ENCODE measurements at regions of chr2 and their contacts with region 1.

Region 1: GRCh38 chr2:231612179-231613053 is 19.8 kb downstream of the TEX44 start:
- DNase-seq: peak; percentile 75
- ATAC-seq: peak; percentile 68
- H3K4me3 ChIP-seq: peak overlapping the region; percentile 78; the same call in 1 of the 2 replicates
- H3K27ac ChIP-seq: peak overlapping the region; percentile 99
- H3K4me1 ChIP-seq: peaks cover 29% of the 10 kb centered on the region
- H3K27me3 ChIP-seq: no peaks in the 10 kb centered on the region
- CTCF ChIP-seq: peak; percentile 93 to 96 (median 94)
- EP300 ChIP-seq: peak in 1 of 2 experiments; percentile 26; a peak in 1 of 4 replicates
- POLR2A ChIP-seq: 0 out of 2 replicates have a peak, but pooled peaks have one; percentile 26
- RAD21 ChIP-seq: peak; percentile 96

Region 2: DNA sequence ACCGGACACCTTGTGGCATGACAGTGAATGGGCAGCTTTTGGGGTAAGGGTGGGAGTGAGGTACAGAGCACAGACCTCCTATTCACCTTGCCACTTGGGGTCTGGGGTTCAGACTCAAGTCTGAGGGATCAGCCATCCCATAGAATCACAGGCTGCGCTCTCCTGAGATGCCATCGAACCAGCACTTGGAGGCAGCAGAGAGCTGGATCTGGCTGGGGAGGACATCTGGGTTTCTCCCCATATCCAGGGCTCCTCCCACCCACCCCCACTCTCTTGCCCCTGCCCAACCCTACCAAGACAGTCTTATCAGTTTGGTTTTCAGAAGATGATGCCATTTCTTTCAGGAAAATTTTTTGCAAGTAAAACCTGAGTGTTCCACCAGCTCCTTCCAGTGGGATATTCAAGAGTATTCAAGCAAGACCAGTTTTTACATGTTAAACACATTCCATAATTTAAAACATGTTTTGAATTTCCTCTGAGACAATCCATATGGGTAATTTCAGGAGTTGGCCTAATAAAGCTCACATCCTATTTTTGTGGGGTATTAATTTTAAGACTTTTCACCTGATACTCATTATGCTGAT is 48.9 kb before region 1 on chr2:
- CTCF ChIA-PET with region 1: interaction called, 10 read pairs
- POLR2A ChIA-PET with region 1: no interaction called
- RAD21 ChIA-PET with region 1: interaction called, 10 read pairs
- SMC1A ChIA-PET with region 1: interaction called, 4 read pairs
- in situ Hi-C with region 1: no loop called
- intact Hi-C with region 1: no loop called
- DNase-seq: no peak
- ATAC-seq: peak; percentile 99
- H3K4me3 ChIP-seq: no peak overlapping the region
- H3K27ac ChIP-seq: no peak overlapping the region
- H3K4me1 ChIP-seq: no peaks in the 10 kb centered on the region; the same call in 1 of the 2 replicates
- H3K27me3 ChIP-seq: no peaks in the 10 kb centered on the region
- CTCF ChIP-seq: peak; percentile 59 to 89 (median 85); a peak in 5 of 6 replicates
- EP300 ChIP-seq: no peak
- POLR2A ChIP-seq: no peak
- RAD21 ChIP-seq: peak; percentile 83

Region 3: GRCh38 chr2:231648587-231649174 is 36.3 kb after region 1 on chr2:
- CTCF ChIA-PET with region 1: interaction called, 24 read pairs
- POLR2A ChIA-PET with region 1: interaction called, 6 read pairs
- RAD21 ChIA-PET with region 1: interaction called, 6 read pairs
- SMC1A ChIA-PET with region 1: interaction called, 7 read pairs
- in situ Hi-C with region 1: no loop called
- intact Hi-C with region 1: loop called (anchors 2 kb)
- DNase-seq: no peak
- ATAC-seq: peak; percentile 100
- H3K4me3 ChIP-seq: no peak overlapping the region
- H3K27ac ChIP-seq: no peak overlapping the region
- H3K4me1 ChIP-seq: no peaks in the 10 kb centered on the region
- H3K27me3 ChIP-seq: no peaks in the 10 kb centered on the region
- CTCF ChIP-seq: peak; percentile 64 to 85 (median 74)
- EP300 ChIP-seq: no peak
- POLR2A ChIP-seq: no peak
- RAD21 ChIP-seq: peak; percentile 81

Region 4: GRCh38 chr2:231680992-231681853 is 68.8 kb after region 1 on chr2:
- CTCF ChIA-PET with region 1: interaction called, 494 read pairs
- POLR2A ChIA-PET with region 1: interaction called, 247 read pairs
- RAD21 ChIA-PET with region 1: interaction called, 353 read pairs
- SMC1A ChIA-PET with region 1: interaction called, 255 read pairs
- in situ Hi-C with region 1: no loop called
- intact Hi-C with region 1: no loop called
- DNase-seq: no peak
- ATAC-seq: peak; percentile 80
- H3K4me3 ChIP-seq: peak overlapping the region; percentile 87
- H3K27ac ChIP-seq: peak overlapping the region; percentile 99
- H3K4me1 ChIP-seq: peaks cover 22% of the 10 kb centered on the region
- H3K27me3 ChIP-seq: no peaks in the 10 kb centered on the region
- CTCF ChIP-seq: no peak
- EP300 ChIP-seq: no peak
- POLR2A ChIP-seq: peak; percentile 84
- RAD21 ChIP-seq: no peak

Region 5: GRCh38 chr2:231706731-231707624 is 94.6 kb after region 1 on chr2:
- CTCF ChIA-PET with region 1: interaction called, 197 read pairs
- POLR2A ChIA-PET with region 1: interaction called, 70 read pairs
- RAD21 ChIA-PET with region 1: interaction called, 124 read pairs
- SMC1A ChIA-PET with region 1: interaction called, 10 read pairs
- in situ Hi-C with region 1: no loop called
- intact Hi-C with region 1: loop called (anchors 1 kb)
- DNase-seq: peak; percentile 95
- ATAC-seq: peak; percentile 61
- H3K4me3 ChIP-seq: peak overlapping the region; percentile 91
- H3K27ac ChIP-seq: peak overlapping the region; percentile 100
- H3K4me1 ChIP-seq: peaks cover 14% of the 10 kb centered on the region
- H3K27me3 ChIP-seq: no peaks in the 10 kb centered on the region
- CTCF ChIP-seq: peak; percentile 91 to 99 (median 99); a peak in 5 of 6 replicates
- EP300 ChIP-seq: no peak
- POLR2A ChIP-seq: no peak
- RAD21 ChIP-seq: no peak

Region 6: GRCh38 chr2:233353769-233354499 is 1741.5 kb after region 1 on chr2 and contains the start of gene DGKD:
- CTCF ChIA-PET with region 1: no interaction called
- POLR2A ChIA-PET with region 1: no interaction called
- RAD21 ChIA-PET with region 1: no interaction called
- SMC1A ChIA-PET with region 1: no interaction called
- in situ Hi-C with region 1: no loop called
- intact Hi-C with region 1: no loop called
- DNase-seq: no peak
- ATAC-seq: peak; percentile 67
- H3K4me3 ChIP-seq: peak within 1 kb of the TSS; percentile 85
- H3K27ac ChIP-seq: peak within 1 kb of the TSS; percentile 94
- H3K4me1 ChIP-seq: peaks cover 32% of the 10 kb centered on the region
- H3K27me3 ChIP-seq: no peaks in the 10 kb centered on the region
- CTCF ChIP-seq: peak in 2 of 3 experiments; percentile 43 to 50; a peak in 3 of 6 replicates
- EP300 ChIP-seq: no peak
- POLR2A ChIP-seq: peak; percentile 93
- RAD21 ChIP-seq: 0 out of 2 replicates have a peak, but pooled peaks have one; percentile 7
- polyA plus RNA-seq, gene DGKD: 2.7 to 3.1 TPM